Psoas muscle (tissue), 8 donors: ENCODE measurements at regions of chr7 and their contacts with region 1.

Region 1: GRCh38 chr7:80392229-80393169 is 119.4 kb downstream of the GNAT3 start:
- DNase-seq: no peak
- ATAC-seq: no peak
- H3K4me3 ChIP-seq: no peak overlapping the region
- H3K27ac ChIP-seq: no peak overlapping the region
- H3K4me1 ChIP-seq: no peaks in the 10 kb centered on the region
- H3K27me3 ChIP-seq: no peaks in the 10 kb centered on the region
- CTCF ChIP-seq: peak; percentile 59

Region 2: DNA sequence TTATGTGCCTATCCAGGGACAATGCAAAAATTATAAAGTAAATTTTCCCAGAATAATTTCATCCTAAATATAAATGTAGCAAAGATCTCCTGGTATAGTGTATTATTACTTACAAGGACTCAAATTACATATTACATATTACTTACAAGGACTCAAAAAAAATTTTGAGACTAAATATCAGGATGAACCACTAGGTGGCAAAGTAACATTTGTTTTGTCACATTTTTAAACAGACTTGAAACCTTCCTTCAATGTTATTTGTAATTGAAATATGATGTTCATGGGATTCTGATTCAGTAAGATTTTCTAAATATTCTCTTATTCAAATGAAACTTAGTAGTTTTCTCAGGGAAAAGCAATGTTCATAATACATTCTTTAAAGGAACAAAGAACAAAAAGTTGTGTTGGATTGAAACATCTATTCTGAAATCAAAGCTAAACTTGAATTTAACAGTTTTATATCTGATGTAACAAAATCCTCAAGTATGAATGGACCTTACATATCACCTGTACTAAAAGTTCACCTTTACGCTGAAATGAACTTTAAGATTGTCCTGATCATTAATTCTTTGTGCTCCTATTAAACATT is 332.2 kb before region 1 on chr7:
- intact Hi-C with region 1: loop called (anchors 2 to 5 kb)
- DNase-seq: no peak
- ATAC-seq: no peak
- H3K4me3 ChIP-seq: no peak overlapping the region
- H3K27ac ChIP-seq: no peak overlapping the region
- H3K4me1 ChIP-seq: no peaks in the 10 kb centered on the region
- H3K27me3 ChIP-seq: no peaks in the 10 kb centered on the region
- CTCF ChIP-seq: peak; percentile 67

Region 3: GRCh38 chr7:80095545-80095944 is 297.0 kb before region 1 on chr7:
- intact Hi-C with region 1: loop called in 1 of 2 experiments (anchors 10 kb)
- DNase-seq: no peak
- ATAC-seq: no peak
- H3K4me3 ChIP-seq: no peak overlapping the region
- H3K27ac ChIP-seq: no peak overlapping the region
- H3K4me1 ChIP-seq: no peaks in the 10 kb centered on the region
- H3K27me3 ChIP-seq: no peaks in the 10 kb centered on the region
- CTCF ChIP-seq: peak; percentile 45

Region 4: DNA sequence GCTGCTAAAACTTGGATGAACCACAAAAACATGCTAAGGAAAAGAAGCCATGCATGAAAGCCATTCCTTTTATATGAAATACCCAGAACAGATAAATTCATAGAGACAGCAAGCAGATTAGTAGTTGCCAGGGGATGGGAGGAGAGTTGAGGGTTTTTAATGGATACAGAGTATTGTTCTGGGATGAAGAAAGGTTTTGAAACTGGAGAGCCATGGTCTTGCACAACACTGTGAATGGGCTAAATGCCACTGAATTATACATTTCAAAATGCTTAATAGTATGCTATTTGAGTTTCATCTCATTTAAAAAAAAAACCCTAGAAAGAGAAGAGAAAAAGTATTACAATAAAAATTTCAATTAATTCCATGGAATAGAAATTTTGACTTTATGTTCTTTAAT is 35.0 kb before region 1 on chr7:
- intact Hi-C with region 1: no loop called
- DNase-seq: no peak
- ATAC-seq: no peak
- H3K4me3 ChIP-seq: no peak overlapping the region
- H3K27ac ChIP-seq: no peak overlapping the region
- H3K4me1 ChIP-seq: no peaks in the 10 kb centered on the region
- H3K27me3 ChIP-seq: no peaks in the 10 kb centered on the region
- CTCF ChIP-seq: no peak